ENCODE measurements at regions of chr2 and their contacts with region 1.

Region 1: GRCh38 chr2:50492477-50492851 is 539.5 kb downstream of the NRXN1 start:
- DNase-seq: peak in 4 of 14 experiments; percentile 21 to 61 (median 54)
- ATAC-seq: peak; percentile 69
- H3K4me3 ChIP-seq: no peak overlapping the region
- H3K4me3 Mint-ChIP-seq: peak overlapping the region; percentile 11
- H3K27ac ChIP-seq: no peak overlapping the region
- H3K27ac Mint-ChIP-seq: no peak overlapping the region
- H3K4me1 ChIP-seq: peaks cover 11% of the 10 kb centered on the region
- H3K4me1 Mint-ChIP-seq: peaks cover 18% of the 10 kb centered on the region
- H3K27me3 ChIP-seq: no peaks in the 10 kb centered on the region
- H3K27me3 Mint-ChIP-seq: peaks cover 4% of the 10 kb centered on the region
- CTCF ChIP-seq: peak; percentile 71

Region 2: DNA sequence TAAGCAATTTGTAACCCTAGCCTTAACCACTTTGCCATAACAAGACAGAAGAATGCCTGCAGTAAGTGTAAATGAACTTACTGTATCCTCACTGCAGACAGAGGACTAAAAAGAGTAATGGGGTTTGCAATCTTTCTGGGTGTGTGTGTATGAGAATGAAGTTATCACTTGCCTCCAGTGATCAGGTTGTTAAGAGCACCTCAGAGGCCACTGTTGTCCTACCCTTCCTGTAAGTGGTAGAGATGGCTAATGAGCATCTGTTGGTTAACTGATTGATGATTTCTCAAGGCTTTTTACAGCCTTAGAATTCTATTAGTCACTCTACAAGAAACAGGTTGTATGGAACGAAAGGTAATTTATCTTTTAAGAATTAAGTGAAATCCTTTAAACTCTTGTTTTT is 1902.4 kb before region 1 on chr2:
- CTCF ChIA-PET with region 1: no interaction called
- POLR2A ChIA-PET with region 1: no interaction called
- intact Hi-C with region 1: loop called in 1 of 2 experiments (anchors 10 kb)
- DNase-seq: no peak
- ATAC-seq: no peak
- H3K4me3 ChIP-seq: no peak overlapping the region
- H3K4me3 Mint-ChIP-seq: no peak overlapping the region
- H3K27ac ChIP-seq: no peak overlapping the region
- H3K27ac Mint-ChIP-seq: no peak overlapping the region
- H3K4me1 ChIP-seq: no peaks in the 10 kb centered on the region
- H3K4me1 Mint-ChIP-seq: no peaks in the 10 kb centered on the region
- H3K27me3 ChIP-seq: no peaks in the 10 kb centered on the region
- H3K27me3 Mint-ChIP-seq: no peaks in the 10 kb centered on the region
- CTCF ChIP-seq: no peak

Region 3: DNA sequence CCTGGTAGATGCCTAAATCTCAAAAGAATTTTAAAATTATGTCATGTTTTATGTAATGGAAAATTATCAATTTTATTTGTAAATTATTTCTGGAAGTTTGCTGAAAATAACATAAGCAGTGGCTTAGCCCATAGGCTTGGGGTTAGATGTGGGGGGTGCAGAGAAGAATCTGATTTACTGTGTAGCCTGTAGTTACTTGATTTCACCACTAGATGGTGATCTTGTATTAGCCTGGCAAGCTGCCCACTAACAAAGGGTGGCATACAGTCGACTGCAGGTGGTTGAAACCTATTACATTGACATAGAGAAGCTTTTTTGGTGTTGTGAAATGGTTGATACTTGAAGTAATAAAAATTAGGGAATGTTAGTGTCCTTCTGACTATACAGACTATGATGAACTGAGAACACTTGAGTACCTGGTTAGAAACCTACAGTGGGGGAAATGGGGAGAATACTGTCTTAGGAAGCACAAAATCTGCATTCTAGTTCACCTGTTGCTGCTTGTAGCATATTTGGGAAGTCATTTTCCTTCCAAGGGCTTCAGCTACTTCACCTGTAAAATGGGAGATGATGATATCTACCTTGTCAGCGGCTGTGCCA is 1545.9 kb before region 1 on chr2:
- CTCF ChIA-PET with region 1: no interaction called
- POLR2A ChIA-PET with region 1: no interaction called
- intact Hi-C with region 1: loop called in 1 of 2 experiments (anchors 2 kb)
- DNase-seq: peak in 11 of 14 experiments; percentile 0 to 61 (median 12)
- ATAC-seq: peak; percentile 83
- H3K4me3 ChIP-seq: no peak overlapping the region
- H3K4me3 Mint-ChIP-seq: no peak overlapping the region
- H3K27ac ChIP-seq: no peak overlapping the region
- H3K27ac Mint-ChIP-seq: no peak overlapping the region
- H3K4me1 ChIP-seq: no peaks in the 10 kb centered on the region
- H3K4me1 Mint-ChIP-seq: no peaks in the 10 kb centered on the region
- H3K27me3 ChIP-seq: no peaks in the 10 kb centered on the region
- H3K27me3 Mint-ChIP-seq: no peaks in the 10 kb centered on the region
- CTCF ChIP-seq: peak; percentile 85

Region 4: GRCh38 chr2:50225021-50225928 is 267.2 kb before region 1 on chr2:
- CTCF ChIA-PET with region 1: no interaction called
- POLR2A ChIA-PET with region 1: no interaction called
- intact Hi-C with region 1: no loop called
- DNase-seq: no peak
- ATAC-seq: no peak
- H3K4me3 ChIP-seq: no peak overlapping the region
- H3K4me3 Mint-ChIP-seq: no peak overlapping the region
- H3K27ac ChIP-seq: no peak overlapping the region
- H3K27ac Mint-ChIP-seq: no peak overlapping the region
- H3K4me1 ChIP-seq: no peaks in the 10 kb centered on the region
- H3K4me1 Mint-ChIP-seq: no peaks in the 10 kb centered on the region
- H3K27me3 ChIP-seq: no peaks in the 10 kb centered on the region
- H3K27me3 Mint-ChIP-seq: no peaks in the 10 kb centered on the region
- CTCF ChIP-seq: no peak